ENCODE measurements at regions of chr3 and their contacts with region 1.

Region 1: GRCh38 chr3:45210308-45211041 is 15.6 kb downstream of the TMEM158 start:
- H3K4me3 ChIP-seq: no peak overlapping the region
- H3K27ac ChIP-seq: no peak overlapping the region
- H3K4me1 ChIP-seq: no peaks in the 10 kb centered on the region
- CTCF ChIP-seq: peak; percentile 91

Region 2: GRCh38 chr3:45037734-45038455 is 172.6 kb before region 1 on chr3:
- CTCF ChIA-PET with region 1: interaction called, 128 read pairs
- POLR2A ChIA-PET with region 1: no interaction called
- H3K4me3 ChIP-seq: no peak overlapping the region
- H3K27ac ChIP-seq: no peak overlapping the region
- H3K4me1 ChIP-seq: no peaks in the 10 kb centered on the region
- CTCF ChIP-seq: peak; percentile 89

Region 3: DNA sequence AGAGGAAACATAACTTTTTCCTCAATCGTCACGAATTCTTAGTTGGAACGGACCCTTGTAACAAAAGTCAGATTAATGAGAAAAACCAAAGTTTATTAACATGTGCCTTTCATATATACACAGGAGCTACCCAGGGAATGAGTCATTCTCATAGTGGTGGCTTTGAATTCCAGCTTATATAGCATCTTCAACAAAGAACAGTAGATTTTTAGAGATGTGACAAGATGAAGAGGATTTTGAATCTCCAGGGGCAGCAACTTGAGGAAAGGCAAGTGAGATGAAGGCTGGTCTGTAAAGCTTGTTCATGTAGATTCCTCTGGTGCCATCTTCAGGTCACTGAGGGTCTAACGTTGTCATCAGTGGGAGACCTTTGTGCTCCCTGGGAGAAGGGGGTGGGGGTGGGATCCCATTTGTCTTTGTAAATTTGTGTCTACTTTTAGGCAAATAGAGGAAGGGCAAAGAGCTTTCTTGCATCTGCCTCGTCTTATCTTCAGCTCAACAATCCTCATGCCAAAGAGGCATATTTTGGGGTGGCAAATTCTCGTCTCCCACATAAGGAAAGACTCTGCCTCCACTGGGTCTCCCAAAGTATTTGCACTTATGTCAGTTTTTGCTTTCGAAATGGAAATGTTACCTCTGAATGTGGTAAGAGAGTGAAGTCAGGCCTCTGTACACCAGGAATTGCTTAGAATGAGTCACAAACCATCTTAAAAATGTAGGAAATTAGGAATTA is 154.9 kb before region 1 on chr3:
- CTCF ChIA-PET with region 1: interaction called, 10 read pairs
- POLR2A ChIA-PET with region 1: no interaction called
- H3K4me3 ChIP-seq: no peak overlapping the region
- H3K27ac ChIP-seq: no peak overlapping the region
- H3K4me1 ChIP-seq: no peaks in the 10 kb centered on the region
- CTCF ChIP-seq: no peak

Region 4: DNA sequence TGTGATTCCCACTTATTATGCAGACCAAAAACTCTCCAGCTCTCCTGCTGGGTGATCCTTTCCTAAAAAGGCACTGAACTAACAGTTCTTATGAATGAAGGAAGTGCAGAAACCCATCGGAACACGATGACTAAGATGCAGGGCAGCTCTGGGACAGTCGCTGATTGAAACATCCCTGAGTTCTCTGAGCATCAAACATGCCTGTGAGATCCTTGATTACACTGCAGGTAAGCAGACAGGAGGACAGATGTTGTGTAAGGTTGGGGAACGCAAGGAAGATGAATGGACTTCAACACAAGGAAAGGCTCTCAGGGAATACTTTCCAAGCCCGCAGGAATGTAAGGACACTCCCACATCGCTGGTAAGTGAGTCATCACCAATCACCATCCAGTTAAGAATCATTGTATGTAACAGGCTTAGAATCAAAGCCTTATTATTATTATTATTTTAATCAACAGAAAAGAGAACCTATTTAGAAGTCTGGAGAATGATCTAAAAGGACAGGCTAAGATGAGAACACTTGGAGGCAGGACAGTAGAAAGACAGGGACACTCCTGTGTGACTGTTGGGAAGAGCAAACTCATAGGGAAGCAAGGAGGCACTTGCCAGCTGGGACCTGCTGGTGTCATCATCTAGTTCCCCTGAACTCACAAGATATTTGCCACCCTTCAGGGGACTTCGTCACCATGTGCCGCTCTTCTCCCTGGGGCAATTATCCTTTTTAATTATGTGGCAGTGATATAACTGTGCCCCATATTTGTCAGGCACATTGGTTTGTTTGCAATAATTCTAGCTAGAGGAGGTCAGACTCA is 10.4 kb before region 1 on chr3:
- CTCF ChIA-PET with region 1: interaction called, 11 read pairs
- POLR2A ChIA-PET with region 1: no interaction called
- H3K4me3 ChIP-seq: no peak overlapping the region
- H3K27ac ChIP-seq: no peak overlapping the region
- H3K4me1 ChIP-seq: no peaks in the 10 kb centered on the region
- CTCF ChIP-seq: no peak